ENCODE measurements at regions of chr19 and their contacts with region 1.

Region 1: DNA sequence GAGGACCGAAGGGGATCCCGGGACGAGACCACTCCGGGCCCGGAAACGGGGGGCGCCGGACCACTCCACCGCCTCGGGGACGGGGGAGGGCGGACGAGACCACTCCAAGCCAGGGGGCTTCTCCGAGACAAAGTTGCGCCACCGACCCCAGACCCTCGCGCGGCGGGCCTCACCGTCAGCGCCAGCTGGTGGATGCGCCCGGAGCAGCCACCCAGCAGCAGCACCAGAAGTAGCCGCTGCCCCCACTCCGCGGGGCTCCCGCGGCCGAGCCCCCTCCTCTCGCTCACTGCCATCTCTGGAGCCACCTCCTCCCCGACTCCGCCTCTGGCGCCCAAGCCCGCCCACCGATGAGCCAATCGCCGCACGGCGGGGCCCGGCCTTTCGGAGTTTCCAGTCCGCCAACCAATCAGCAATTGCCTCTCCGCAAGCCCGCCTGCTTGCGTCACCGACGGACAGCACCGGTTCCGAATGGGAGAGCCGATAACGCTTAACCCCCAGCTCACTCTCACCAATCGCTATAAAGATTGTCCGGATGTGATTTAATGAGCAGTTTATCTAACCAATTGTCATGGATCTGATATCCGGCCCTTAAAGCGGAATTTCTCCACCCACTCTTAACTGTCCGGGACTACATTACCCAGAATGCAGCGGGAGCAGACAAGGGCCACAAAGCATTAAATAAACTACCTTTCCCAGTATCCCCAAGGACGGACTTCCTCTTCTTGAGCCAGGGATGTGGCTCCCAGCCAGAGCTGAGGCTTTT is at the start of gene GPR108:
- DNase-seq: peak; percentile 94 to 100 (median 99)
- ATAC-seq: peak; percentile 85
- H3K4me3 ChIP-seq: peak within 1 kb of the TSS; percentile 87
- H3K4me3 Mint-ChIP-seq: peak within 1 kb of the TSS; percentile 89 to 98 (median 96)
- H3K27ac ChIP-seq: peak within 1 kb of the TSS; percentile 86
- H3K27ac Mint-ChIP-seq: peak within 1 kb of the TSS; percentile 90 to 99 (median 96)
- H3K4me1 ChIP-seq: peaks cover 31 to 32% of the 10 kb centered on the region in 2 donors
- H3K4me1 Mint-ChIP-seq: peaks cover 24 to 41% (median 37%) of the 10 kb centered on the region in 7 donors
- H3K27me3 ChIP-seq: no peaks in the 10 kb centered on the region
- H3K27me3 Mint-ChIP-seq: peaks cover 0 to 3% (median 0%) of the 10 kb centered on the region in 5 donors
- total RNA-seq, gene GPR108: 36.1 to 81.6 (median 61.9) TPM

Region 2: DNA sequence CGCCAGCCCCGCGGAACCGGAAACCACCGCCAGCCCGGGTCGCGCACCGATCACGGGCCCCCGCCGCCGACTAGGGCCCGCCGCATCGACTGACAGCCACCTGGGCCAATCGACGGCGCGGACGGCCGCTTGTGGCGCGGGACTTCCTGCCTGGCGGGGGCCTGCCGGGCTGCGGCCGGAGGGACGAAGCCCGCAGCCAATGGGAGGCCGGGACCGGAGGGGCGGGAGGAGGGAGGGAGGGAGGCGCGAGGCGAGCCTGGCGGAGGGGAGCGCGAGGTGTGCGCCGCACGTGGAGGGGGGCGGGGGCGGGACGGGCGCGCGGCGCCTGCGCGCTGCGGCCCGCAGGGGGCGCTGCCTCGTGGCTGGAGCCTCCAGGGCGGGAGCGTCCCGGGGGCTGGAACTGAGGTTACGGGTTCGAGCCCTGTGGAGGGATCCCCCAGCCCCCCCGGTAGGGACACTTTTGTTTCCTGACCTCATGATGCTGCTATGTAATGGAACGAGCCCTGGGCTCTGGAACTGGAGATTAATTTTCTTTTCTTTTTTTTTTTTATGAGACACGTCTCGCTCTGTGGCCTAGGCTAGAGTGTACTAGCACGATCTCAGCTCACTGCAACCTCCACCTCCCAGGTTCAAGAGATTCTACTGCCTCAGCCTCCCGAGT is 457.4 kb before region 1 on chr19 and contains the start of gene MLLT1:
- CTCF ChIA-PET with region 1: no interaction called
- POLR2A ChIA-PET with region 1: no interaction called
- intact Hi-C with region 1: loop called in 1 of 2 experiments (anchors 5 kb)
- DNase-seq: peak; percentile 88 to 98 (median 90)
- ATAC-seq: peak; percentile 96
- H3K4me3 ChIP-seq: peak within 1 kb of the TSS; percentile 54
- H3K4me3 Mint-ChIP-seq: peak within 1 kb of the TSS; percentile 85 to 97 (median 92)
- H3K27ac ChIP-seq: peak within 1 kb of the TSS; percentile 78
- H3K27ac Mint-ChIP-seq: peak within 1 kb of the TSS; percentile 87 to 95 (median 93)
- H3K4me1 ChIP-seq: peaks cover 3 to 20% of the 10 kb centered on the region in 2 donors
- H3K4me1 Mint-ChIP-seq: peaks cover 30 to 42% (median 39%) of the 10 kb centered on the region in 7 donors
- H3K27me3 ChIP-seq: no peaks in the 10 kb centered on the region
- H3K27me3 Mint-ChIP-seq: peaks cover 0 to 6% (median 0%) of the 10 kb centered on the region in 5 donors
- total RNA-seq, gene MLLT1: 33.3 to 47.5 (median 39.0) TPM

Region 3: DNA sequence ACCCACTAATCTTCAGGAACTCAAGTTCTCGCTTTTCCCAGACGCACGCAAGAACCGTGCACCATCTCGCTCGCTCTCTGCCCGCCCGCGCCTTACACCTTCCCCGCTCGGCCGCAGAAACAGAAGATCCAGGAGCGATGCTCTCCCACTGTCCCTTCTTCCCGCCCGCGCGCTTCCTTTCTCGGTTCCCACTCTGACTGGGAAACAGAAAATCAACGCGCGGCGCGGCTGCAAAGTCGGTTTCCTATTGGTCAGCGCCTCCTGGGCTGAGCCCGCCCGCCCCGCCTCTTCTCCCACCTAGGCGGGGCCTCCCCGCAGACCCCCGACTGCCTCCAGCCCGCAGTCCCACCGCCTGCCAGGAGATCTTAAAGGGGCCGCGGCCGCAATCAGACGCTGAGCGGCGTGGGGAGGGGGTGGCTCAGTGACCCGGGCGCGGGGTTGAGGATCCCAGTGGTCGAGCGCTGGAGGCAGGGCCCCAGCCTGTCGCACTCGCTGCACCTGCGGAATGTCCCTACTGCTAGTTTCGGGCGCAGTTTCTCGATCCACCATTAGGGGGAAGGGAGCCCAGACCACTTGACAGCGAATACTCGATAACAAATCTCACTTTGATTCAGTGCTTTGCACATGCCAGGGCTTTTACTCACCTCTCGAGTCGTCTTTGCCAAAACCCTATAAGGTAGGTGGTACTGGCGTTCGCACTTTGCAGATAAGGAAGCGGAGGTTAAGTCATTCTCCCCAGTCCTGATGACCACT is 277.2 kb before region 1 on chr19:
- CTCF ChIA-PET with region 1: no interaction called
- POLR2A ChIA-PET with region 1: no interaction called
- intact Hi-C with region 1: loop called (anchors 1 to 2 kb)
- DNase-seq: peak; percentile 87 to 97 (median 96)
- ATAC-seq: peak; percentile 90
- H3K4me3 ChIP-seq: peak overlapping the region; percentile 72
- H3K4me3 Mint-ChIP-seq: peak overlapping the region; percentile 92 to 99 (median 98)
- H3K27ac ChIP-seq: peak overlapping the region; percentile 83
- H3K27ac Mint-ChIP-seq: peak overlapping the region; percentile 83 to 96 (median 91)
- H3K4me1 ChIP-seq: peaks cover 0 to 4% of the 10 kb centered on the region in 2 donors
- H3K4me1 Mint-ChIP-seq: peaks cover 11 to 40% (median 34%) of the 10 kb centered on the region in 7 donors
- H3K27me3 ChIP-seq: no peaks in the 10 kb centered on the region
- H3K27me3 Mint-ChIP-seq: peaks cover 0 to 8% (median 0%) of the 10 kb centered on the region in 5 donors

Region 4: DNA sequence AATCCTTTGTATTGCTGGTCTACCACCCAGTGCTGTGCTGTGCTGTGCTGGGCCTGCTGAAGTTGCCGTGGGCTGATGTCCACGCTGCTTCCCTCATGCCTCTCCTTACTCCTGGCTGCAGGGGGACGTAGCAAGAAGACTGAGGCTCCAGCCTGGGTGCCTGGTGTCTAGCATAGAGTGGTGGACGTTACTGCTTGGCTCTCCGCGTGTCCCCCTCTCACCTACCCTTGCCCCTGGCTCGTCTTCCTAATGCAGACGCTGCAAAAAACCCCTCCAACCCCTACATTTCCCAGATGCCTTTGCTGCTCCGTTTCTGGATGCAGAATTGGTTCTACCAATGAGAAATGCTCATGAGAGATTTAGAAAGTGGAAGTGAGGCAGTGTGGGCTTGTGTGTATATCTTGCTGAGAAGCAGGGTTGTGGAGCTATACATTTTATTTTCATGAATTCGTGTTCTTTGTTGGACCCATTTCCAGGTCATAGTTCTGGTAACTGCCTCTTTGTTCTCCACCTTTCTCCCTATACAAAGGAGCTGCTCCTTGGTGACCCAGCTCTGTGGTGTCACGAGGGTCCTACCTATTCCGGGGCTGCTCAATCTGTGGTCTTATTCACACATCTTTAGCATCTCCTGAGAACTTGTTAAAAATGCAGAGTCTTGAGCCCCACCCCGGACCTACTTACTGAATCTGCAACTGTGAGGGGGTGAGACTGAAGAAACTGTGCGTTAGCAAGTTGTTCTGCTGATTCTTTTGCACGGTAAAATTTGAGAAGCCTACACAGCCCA is 248.0 kb before region 1 on chr19:
- CTCF ChIA-PET with region 1: no interaction called
- POLR2A ChIA-PET with region 1: no interaction called
- intact Hi-C with region 1: no loop called
- DNase-seq: no peak
- ATAC-seq: no peak
- H3K4me3 ChIP-seq: peak overlapping the region; percentile 14
- H3K4me3 Mint-ChIP-seq: peak overlapping the region in 8 of 10 donors; percentile 16 to 80 (median 38)
- H3K27ac ChIP-seq: no peak overlapping the region
- H3K27ac Mint-ChIP-seq: peak overlapping the region in 2 of 9 donors; percentile 25 to 38
- H3K4me1 ChIP-seq: peaks cover 0 to 6% of the 10 kb centered on the region in 2 donors
- H3K4me1 Mint-ChIP-seq: peaks cover 0 to 9% (median 5%) of the 10 kb centered on the region in 7 donors
- H3K27me3 ChIP-seq: no peaks in the 10 kb centered on the region
- H3K27me3 Mint-ChIP-seq: no peaks in the 10 kb centered on the region

Region 5: DNA sequence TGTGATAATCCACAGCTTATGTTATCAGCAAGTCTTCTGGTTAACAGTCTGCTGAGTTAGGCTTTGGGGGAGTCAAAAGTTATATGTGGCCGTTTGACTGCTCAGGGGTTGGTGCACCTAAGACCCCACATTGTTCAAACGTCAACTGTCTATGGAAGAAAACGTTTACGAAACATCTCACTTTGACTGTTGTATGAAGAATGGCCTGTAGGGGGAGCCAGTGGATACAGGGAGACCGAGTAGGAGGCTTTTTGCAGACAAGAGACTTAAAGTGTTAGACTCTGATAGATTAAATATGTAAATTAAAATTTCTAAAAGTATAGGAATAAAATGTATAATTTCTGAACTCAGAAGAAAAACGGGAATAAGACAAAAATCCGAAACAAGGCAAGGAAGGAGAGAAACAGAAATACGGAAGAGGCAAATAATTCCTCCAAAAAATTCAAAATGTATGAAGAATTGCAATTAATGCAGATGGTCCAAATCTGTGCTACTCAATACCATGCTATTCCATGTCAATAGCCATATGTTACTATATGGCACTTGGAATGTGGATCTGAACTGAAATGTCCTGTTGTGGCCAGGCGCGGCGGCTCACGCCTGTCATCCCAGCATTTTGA is 105.4 kb before region 1 on chr19:
- CTCF ChIA-PET with region 1: interaction called, 3 read pairs
- POLR2A ChIA-PET with region 1: no interaction called
- intact Hi-C with region 1: loop called (anchors 1 kb)
- DNase-seq: peak; percentile 29 to 88 (median 78)
- ATAC-seq: peak; percentile 90
- H3K4me3 ChIP-seq: no peak overlapping the region
- H3K4me3 Mint-ChIP-seq: no peak overlapping the region
- H3K27ac ChIP-seq: no peak overlapping the region
- H3K27ac Mint-ChIP-seq: peak overlapping the region in 3 of 9 donors; percentile 7 to 20 (median 13)
- H3K4me1 ChIP-seq: peaks cover 0 to 5% of the 10 kb centered on the region in 2 donors
- H3K4me1 Mint-ChIP-seq: peaks cover 4 to 20% (median 9%) of the 10 kb centered on the region in 7 donors
- H3K27me3 ChIP-seq: no peaks in the 10 kb centered on the region
- H3K27me3 Mint-ChIP-seq: peaks cover 4 to 7% (median 5%) of the 10 kb centered on the region in 5 donors

Region 6: GRCh38 chr19:6801485-6802086 is 64.1 kb after region 1 on chr19:
- CTCF ChIA-PET with region 1: interaction called, 3 read pairs
- POLR2A ChIA-PET with region 1: interaction called, 19 read pairs
- intact Hi-C with region 1: loop called (anchors 1 kb)
- DNase-seq: peak; percentile 58 to 90 (median 85)
- ATAC-seq: peak; percentile 78
- H3K4me3 ChIP-seq: peak overlapping the region; percentile 67
- H3K4me3 Mint-ChIP-seq: peak overlapping the region; percentile 87 to 99 (median 94)
- H3K27ac ChIP-seq: peak overlapping the region; percentile 85
- H3K27ac Mint-ChIP-seq: peak overlapping the region; percentile 93 to 99 (median 97)
- H3K4me1 ChIP-seq: peaks cover 28 to 35% of the 10 kb centered on the region in 2 donors
- H3K4me1 Mint-ChIP-seq: peaks cover 46 to 85% (median 68%) of the 10 kb centered on the region in 7 donors
- H3K27me3 ChIP-seq: no peaks in the 10 kb centered on the region
- H3K27me3 Mint-ChIP-seq: no peaks in the 10 kb centered on the region

Region 7: GRCh38 chr19:7004313-7004931 is 267.0 kb after region 1 on chr19:
- CTCF ChIA-PET with region 1: interaction called, 3 read pairs
- POLR2A ChIA-PET with region 1: no interaction called
- intact Hi-C with region 1: loop called (anchors 1 to 10 kb)
- DNase-seq: peak in 5 of 9 donors; percentile 14 to 55 (median 54)
- ATAC-seq: peak; percentile 67
- H3K4me3 ChIP-seq: no peak overlapping the region
- H3K4me3 Mint-ChIP-seq: peak overlapping the region in 4 of 10 donors; percentile 26 to 45 (median 28)
- H3K27ac ChIP-seq: no peak overlapping the region
- H3K27ac Mint-ChIP-seq: no peak overlapping the region
- H3K4me1 ChIP-seq: peaks cover 11 to 18% of the 10 kb centered on the region in 2 donors
- H3K4me1 Mint-ChIP-seq: peaks cover 20 to 65% (median 40%) of the 10 kb centered on the region in 7 donors
- H3K27me3 ChIP-seq: no peaks in the 10 kb centered on the region
- H3K27me3 Mint-ChIP-seq: peaks cover 0 to 2% (median 0%) of the 10 kb centered on the region in 5 donors

Region 8: GRCh38 chr19:7919610-7920518 is 1182.4 kb after region 1 on chr19 and contains the start of gene SNAPC2:
- CTCF ChIA-PET with region 1: no interaction called
- POLR2A ChIA-PET with region 1: no interaction called
- intact Hi-C with region 1: loop called in 1 of 2 experiments (anchors 2 kb)
- DNase-seq: peak; percentile 95 to 99 (median 98)
- ATAC-seq: peak; percentile 71
- H3K4me3 ChIP-seq: peak within 1 kb of the TSS; percentile 86
- H3K4me3 Mint-ChIP-seq: peak within 1 kb of the TSS; percentile 88 to 97 (median 94)
- H3K27ac ChIP-seq: peak within 1 kb of the TSS; percentile 75
- H3K27ac Mint-ChIP-seq: peak within 1 kb of the TSS; percentile 76 to 97 (median 92)
- H3K4me1 ChIP-seq: peaks cover 25 to 34% of the 10 kb centered on the region in 2 donors
- H3K4me1 Mint-ChIP-seq: peaks cover 15 to 52% (median 38%) of the 10 kb centered on the region in 7 donors
- H3K27me3 ChIP-seq: peaks cover 3 to 20% of the 10 kb centered on the region in 2 donors
- H3K27me3 Mint-ChIP-seq: peaks cover 12 to 33% (median 14%) of the 10 kb centered on the region in 5 donors
- total RNA-seq, gene SNAPC2: 12.3 to 24.4 (median 21.4) TPM

Measured in naive thymus-derived CD4-positive, alpha-beta T cell (primary cell).